ENCODE measurements at regions of chr3 and their contacts with region 1.

Region 1: GRCh38 chr3:98901392-98902350 is at the start of gene DCBLD2:
- DNase-seq: peak; percentile 99
- H3K4me3 Mint-ChIP-seq: peak within 1 kb of the TSS; percentile 90
- H3K27ac Mint-ChIP-seq: peak within 1 kb of the TSS; percentile 93
- H3K4me1 Mint-ChIP-seq: peaks cover 24% of the 10 kb centered on the region
- H3K27me3 Mint-ChIP-seq: no peaks in the 10 kb centered on the region
- CTCF ChIP-seq: no peak
- total RNA-seq, gene DCBLD2: 161 and 206 TPM in 2 replicates

Region 2: GRCh38 chr3:98817547-98818041 is 84.1 kb before region 1 on chr3:
- CTCF ChIA-PET with region 1: interaction called, 9 read pairs
- POLR2A ChIA-PET with region 1: interaction called, 8 read pairs
- intact Hi-C with region 1: loop called (anchors 5 kb)
- DNase-seq: peak; percentile 50
- H3K4me3 Mint-ChIP-seq: no peak overlapping the region
- H3K27ac Mint-ChIP-seq: peak overlapping the region; percentile 27
- H3K4me1 Mint-ChIP-seq: peaks cover 13% of the 10 kb centered on the region
- H3K27me3 Mint-ChIP-seq: no peaks in the 10 kb centered on the region
- CTCF ChIP-seq: peak; percentile 53

Region 3: GRCh38 chr3:98885851-98886250 is 15.8 kb before region 1 on chr3:
- CTCF ChIA-PET with region 1: interaction called, 5 read pairs
- POLR2A ChIA-PET with region 1: interaction called, 278 read pairs
- intact Hi-C with region 1: loop called (anchors 2 kb)
- DNase-seq: peak; percentile 46
- H3K4me3 Mint-ChIP-seq: no peak overlapping the region
- H3K27ac Mint-ChIP-seq: peak overlapping the region; percentile 20
- H3K4me1 Mint-ChIP-seq: peaks cover 31% of the 10 kb centered on the region
- H3K27me3 Mint-ChIP-seq: no peaks in the 10 kb centered on the region
- CTCF ChIP-seq: no peak

Region 4: GRCh38 chr3:98921957-98922356 is 20.3 kb after region 1 on chr3:
- CTCF ChIA-PET with region 1: interaction called, 4 read pairs
- POLR2A ChIA-PET with region 1: interaction called, 17 read pairs
- intact Hi-C with region 1: loop called (anchors 1 kb)
- DNase-seq: no peak
- H3K4me3 Mint-ChIP-seq: no peak overlapping the region
- H3K27ac Mint-ChIP-seq: no peak overlapping the region
- H3K4me1 Mint-ChIP-seq: peaks cover 18% of the 10 kb centered on the region
- H3K27me3 Mint-ChIP-seq: no peaks in the 10 kb centered on the region
- CTCF ChIP-seq: no peak

Region 5: DNA sequence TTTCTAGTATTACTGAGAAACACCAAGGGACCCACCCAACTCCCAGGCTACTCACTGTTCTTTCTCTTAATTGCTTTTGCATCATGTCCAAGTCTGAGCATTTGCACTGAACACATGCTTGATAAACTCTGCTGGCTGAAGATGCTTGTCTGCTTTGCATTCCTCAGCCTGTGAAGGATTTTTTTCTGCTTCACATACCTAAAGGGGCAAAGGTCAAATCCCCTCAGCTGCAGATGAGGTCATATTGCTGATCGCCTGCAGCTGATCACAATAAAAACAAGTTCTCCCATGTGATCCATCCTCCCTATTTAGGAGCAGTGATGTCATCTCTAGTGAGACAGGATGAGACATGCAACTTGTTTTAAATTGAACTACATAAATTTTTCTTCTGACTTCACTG is 84.4 kb after region 1 on chr3:
- CTCF ChIA-PET with region 1: no interaction called
- POLR2A ChIA-PET with region 1: interaction called, 25 read pairs
- intact Hi-C with region 1: loop called (anchors 1 kb)
- DNase-seq: peak; percentile 39
- H3K4me3 Mint-ChIP-seq: no peak overlapping the region
- H3K27ac Mint-ChIP-seq: peak overlapping the region; percentile 57
- H3K4me1 Mint-ChIP-seq: peaks cover 15% of the 10 kb centered on the region
- H3K27me3 Mint-ChIP-seq: no peaks in the 10 kb centered on the region
- CTCF ChIP-seq: no peak

Region 6: DNA sequence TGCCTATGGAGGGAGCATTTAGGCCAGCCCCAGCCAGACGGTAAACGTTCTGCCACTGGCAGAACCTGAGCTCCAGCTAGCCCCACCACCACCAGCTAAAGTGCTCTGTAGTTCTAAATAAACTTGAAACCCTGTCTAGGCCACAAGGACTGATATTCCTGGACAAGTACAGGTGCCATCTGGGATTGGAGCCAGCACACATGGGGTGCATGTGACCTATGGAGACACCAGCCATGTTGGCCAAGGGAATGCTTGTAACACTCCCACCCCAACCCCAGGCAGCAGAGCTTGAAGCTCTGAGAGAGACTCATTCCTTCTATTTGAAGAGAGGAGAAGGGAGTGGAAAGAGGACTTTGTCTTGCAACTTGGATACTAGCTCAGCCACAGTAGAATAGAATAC is 284.3 kb after region 1 on chr3:
- CTCF ChIA-PET with region 1: no interaction called
- POLR2A ChIA-PET with region 1: no interaction called
- intact Hi-C with region 1: no loop called
- DNase-seq: no peak
- H3K4me3 Mint-ChIP-seq: no peak overlapping the region
- H3K27ac Mint-ChIP-seq: no peak overlapping the region
- H3K4me1 Mint-ChIP-seq: no peaks in the 10 kb centered on the region
- H3K27me3 Mint-ChIP-seq: no peaks in the 10 kb centered on the region
- CTCF ChIP-seq: no peak

Measured in MCF 10A (cell line).